Heart right ventricle (tissue), 16 donors: ENCODE measurements at regions of chr17 and their contacts with region 1.

Region 1: DNA sequence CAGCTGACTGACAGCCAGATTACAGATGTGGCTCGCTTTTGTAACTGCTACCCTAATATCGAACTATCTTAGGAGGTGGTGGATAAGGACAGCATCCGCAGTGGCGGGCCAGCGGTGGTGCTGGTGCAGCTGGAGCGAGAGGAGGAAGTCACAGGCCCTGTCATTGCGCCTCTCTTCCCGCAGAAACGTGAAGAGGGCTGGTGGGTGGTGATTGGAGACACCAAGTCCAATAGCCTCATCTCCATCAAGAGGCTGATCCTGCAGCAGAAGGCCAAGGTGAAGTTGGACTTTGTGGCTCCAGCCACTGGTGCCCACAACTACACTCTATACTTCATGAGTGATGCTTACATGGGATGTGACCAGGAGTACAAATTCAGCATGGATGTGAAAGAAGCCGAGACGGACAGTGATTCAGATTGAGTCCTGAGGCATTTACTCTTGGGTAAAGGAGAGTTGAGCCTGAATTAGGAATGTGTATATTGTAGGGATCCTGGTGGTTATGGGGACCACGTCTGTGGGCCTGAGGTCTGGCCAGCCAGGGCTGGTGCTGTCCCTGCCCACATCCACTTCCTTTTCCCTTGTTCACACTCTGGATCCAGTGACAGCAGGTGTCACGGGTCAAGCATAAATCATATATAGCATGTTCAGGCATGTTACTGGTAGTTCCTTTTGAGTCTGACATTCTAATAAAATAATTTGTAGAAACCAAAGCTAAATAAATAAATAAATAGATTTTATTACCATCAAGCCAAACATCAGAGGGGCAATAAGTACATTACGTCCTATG is 89.0 kb upstream of the SMURF2 start:
- DNase-seq: no peak
- ATAC-seq: no peak
- H3K4me3 ChIP-seq: no peak overlapping the region
- H3K27ac ChIP-seq: no peak overlapping the region
- H3K4me1 ChIP-seq: peaks cover 0 to 7% (median 0%) of the 10 kb centered on the region in 9 donors
- H3K27me3 ChIP-seq: no peaks in the 10 kb centered on the region
- CTCF ChIP-seq: no peak

Region 2: DNA sequence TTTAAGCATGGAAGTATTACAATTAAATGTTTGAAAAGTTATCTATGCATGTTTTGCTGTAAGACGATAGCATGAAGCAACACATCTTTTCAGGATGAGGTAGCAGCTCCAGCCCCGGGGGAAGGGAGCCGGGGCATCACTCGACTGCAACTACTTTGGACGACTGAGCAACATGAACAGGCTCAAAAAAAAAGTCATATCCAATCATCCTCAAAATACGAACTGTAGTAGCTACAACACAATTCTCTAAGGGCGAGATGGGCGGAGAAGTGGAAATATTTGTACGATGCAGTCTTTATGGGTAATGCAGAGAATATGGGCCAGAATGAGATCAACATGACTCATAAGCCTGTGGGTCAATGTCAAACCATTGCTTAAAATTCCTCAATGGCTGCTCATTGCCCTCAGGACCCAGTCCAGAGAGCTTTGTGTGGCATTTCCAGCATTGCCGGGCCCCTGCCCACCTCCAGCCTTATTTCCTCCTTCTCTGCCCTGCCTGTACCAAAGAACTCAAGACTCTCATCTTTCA is 71.3 kb before region 1 on chr17:
- intact Hi-C with region 1: loop called in 1 of 10 experiments (anchors 10 kb)
- DNase-seq: no peak
- ATAC-seq: peak in 5 of 8 donors; percentile 37 to 82 (median 67)
- H3K4me3 ChIP-seq: no peak overlapping the region
- H3K27ac ChIP-seq: no peak overlapping the region
- H3K4me1 ChIP-seq: peaks cover 0 to 6% (median 0%) of the 10 kb centered on the region in 9 donors
- H3K27me3 ChIP-seq: no peaks in the 10 kb centered on the region
- CTCF ChIP-seq: no peak